Activated CD4-positive, alpha-beta memory T cell treated with anti-CD3 and anti-CD28 coated beads, Interleukin-2, amount 10 ng/mL, durations not matched to agents 7 days and 5 days (primary cell): ENCODE measurements at regions of chr5 and their contacts with region 1.

Region 1: DNA sequence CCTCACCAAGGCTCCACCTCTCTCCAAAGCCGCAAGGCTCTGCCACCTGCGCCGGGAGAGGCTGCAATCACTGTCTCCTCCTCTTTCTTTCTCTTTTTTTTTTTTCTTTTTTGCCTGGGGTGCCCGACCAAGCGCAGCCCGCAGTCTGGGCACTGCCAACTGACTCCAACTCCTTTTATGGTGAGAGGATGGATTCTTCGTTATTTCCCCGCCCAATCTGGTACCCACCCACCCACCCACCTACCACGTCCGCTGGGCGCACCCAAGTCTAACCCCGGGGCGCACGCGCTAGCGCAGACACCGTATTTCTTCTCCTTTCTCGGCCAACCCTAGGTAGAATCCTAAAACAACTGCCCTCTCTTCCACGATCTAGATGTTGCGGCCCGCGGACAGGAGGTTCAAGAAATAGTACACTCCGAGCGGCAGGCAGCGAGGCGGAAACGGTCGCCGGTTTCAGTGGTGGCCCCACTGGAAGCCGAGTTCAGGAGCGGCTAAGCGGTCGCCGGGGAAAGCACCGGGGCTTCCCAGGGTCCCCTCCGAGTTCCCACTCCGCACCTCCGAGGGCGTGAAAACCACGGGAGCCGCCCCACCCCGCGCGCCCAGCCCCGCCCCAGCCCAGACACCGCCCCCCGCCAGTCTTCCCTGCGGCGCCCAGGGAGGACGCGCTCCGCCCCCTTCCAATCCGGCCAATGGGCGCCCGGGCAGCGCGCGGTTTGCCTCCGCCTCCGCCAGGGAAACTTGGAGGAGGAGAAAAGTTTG is 381 bp upstream of the PTGER4 start:
- DNase-seq: peak; percentile 93
- H3K4me3 Mint-ChIP-seq: peak overlapping the region; percentile 95
- H3K27ac Mint-ChIP-seq: peak overlapping the region; percentile 96
- H3K4me1 Mint-ChIP-seq: peaks cover 51% of the 10 kb centered on the region
- H3K27me3 Mint-ChIP-seq: no peaks in the 10 kb centered on the region

Region 2: DNA sequence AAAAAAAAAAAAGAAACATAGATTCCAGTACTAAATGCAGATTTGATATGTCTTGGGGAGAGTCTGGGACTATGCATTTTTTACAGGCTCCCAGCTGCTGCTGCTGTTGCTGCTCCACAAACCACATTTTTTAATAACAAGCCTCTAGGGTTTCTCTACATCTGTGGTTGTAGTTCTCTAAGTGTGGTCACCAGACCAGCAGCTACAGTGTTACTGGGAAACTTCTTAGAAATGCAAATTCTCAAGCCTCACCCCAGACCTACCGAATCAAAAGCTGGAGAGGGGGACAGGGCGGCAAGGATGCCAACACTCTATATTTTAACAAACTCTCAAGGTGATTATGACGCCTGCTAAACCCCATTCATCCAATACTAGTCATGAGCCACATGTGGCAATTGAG is 293.0 kb before region 1 on chr5:
- CTCF ChIA-PET with region 1: interaction called, 4 read pairs
- POLR2A ChIA-PET with region 1: interaction called, 20 read pairs
- DNase-seq: peak; percentile 52
- H3K4me3 Mint-ChIP-seq: no peak overlapping the region
- H3K27ac Mint-ChIP-seq: peak overlapping the region; percentile 53
- H3K4me1 Mint-ChIP-seq: peaks cover 87% of the 10 kb centered on the region
- H3K27me3 Mint-ChIP-seq: no peaks in the 10 kb centered on the region

Region 3: DNA sequence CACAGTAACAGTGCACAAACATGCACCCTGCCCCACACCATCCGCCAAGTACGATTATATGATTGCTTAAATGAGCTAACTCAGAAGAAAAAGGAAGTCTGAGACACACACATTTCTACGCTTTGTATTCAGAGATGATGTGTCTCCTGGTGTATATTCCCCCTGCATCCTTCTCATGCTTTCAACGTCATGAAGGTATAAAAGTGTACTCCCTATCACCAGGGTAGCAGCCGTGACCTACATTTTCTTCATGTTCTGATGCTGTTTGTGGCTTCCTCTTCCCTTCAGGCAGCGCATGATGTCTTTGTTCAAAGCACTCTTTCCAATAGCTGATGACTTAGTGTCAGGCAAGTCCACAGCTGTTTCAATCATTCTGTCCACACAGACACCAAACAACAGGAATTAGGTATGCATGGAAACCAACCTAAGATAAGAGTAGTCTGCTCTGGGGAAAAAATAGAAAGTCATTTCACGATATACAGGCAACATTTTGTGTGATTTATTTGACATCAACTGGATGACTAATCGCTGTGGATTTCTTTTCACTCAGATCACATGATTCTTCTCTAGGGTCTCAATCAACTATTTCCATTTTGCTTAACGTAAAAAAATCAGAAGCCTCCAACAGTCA is 269.0 kb before region 1 on chr5:
- CTCF ChIA-PET with region 1: interaction called, 11 read pairs
- POLR2A ChIA-PET with region 1: interaction called, 145 read pairs
- DNase-seq: peak; percentile 76
- H3K4me3 Mint-ChIP-seq: peak overlapping the region; percentile 63
- H3K27ac Mint-ChIP-seq: peak overlapping the region; percentile 90
- H3K4me1 Mint-ChIP-seq: peaks cover 55% of the 10 kb centered on the region
- H3K27me3 Mint-ChIP-seq: no peaks in the 10 kb centered on the region

Region 4: DNA sequence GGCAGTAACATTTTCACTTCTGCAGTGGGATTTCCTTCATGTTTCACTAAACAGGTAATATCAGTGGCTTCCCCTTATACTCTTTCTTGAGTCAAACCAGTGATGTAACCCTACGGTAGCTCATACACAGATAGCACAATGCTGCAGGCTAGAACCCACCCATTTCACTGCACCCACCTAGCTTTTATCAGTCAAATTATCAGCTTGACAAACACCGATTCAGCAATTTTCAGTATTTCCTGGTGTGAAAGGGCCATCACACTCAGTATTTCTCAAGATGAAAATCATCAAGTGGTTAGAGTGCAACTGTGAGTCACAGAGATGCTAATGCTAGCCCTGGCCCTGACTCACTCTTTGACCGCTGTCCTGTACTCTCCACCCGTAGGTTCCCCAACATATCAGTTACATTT is 241.9 kb before region 1 on chr5:
- CTCF ChIA-PET with region 1: no interaction called
- POLR2A ChIA-PET with region 1: interaction called, 51 read pairs
- DNase-seq: peak; percentile 50
- H3K4me3 Mint-ChIP-seq: no peak overlapping the region
- H3K27ac Mint-ChIP-seq: peak overlapping the region; percentile 81
- H3K4me1 Mint-ChIP-seq: peaks cover 69% of the 10 kb centered on the region
- H3K27me3 Mint-ChIP-seq: no peaks in the 10 kb centered on the region

Region 5: DNA sequence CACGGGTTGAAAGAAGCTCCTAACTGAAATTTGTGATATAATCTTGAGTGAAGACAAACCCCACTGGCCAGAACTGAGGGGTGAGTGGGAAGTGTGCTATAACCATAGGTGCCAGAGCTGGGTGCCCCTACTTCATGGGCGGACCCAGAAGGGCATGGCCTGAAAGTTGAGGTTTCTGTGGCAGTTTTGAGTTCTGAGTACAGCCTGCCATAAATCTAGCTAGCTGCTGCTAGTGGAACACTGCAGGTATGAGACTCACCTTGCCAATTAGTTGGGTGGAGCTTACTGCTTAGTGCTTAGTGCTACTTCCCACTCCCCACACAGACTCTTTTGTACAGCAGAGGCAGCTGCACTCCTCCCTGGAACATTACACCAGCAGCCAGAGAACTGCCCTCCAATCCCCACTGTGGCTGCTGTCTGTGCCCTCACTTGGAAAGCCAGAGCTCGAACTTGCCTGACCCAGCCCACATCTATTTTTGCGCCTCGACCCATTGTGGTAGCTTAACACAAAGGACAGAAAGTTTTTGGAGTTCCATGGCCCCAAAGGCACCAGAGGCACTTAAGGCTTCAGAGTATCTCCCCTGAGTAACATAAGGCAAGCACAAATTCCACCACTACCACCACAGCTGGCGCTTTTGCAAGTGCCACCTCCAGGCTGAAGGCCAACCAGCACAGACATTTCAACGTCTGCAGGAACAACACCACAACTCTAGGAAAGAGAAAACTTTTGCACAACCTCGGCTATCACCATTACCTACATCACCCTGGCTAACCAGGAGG is 26.7 kb before region 1 on chr5:
- CTCF ChIA-PET with region 1: interaction called, 6 read pairs
- POLR2A ChIA-PET with region 1: interaction called, 72 read pairs
- DNase-seq: peak; percentile 45
- H3K4me3 Mint-ChIP-seq: peak overlapping the region; percentile 84
- H3K27ac Mint-ChIP-seq: peak overlapping the region; percentile 94
- H3K4me1 Mint-ChIP-seq: peaks cover 77% of the 10 kb centered on the region
- H3K27me3 Mint-ChIP-seq: no peaks in the 10 kb centered on the region